ENCODE measurements at regions of chr7 and their contacts with region 1.

Region 1: GRCh38 chr7:34321000-34321581 is 336.9 kb upstream of the NPSR1 start:
- DNase-seq: peak in 6 of 9 donors; percentile 18 to 38 (median 25)
- ATAC-seq: peak; percentile 55
- H3K4me3 ChIP-seq: no peak overlapping the region
- H3K4me3 Mint-ChIP-seq: peak overlapping the region in 5 of 10 donors; percentile 3 to 51 (median 37)
- H3K27ac ChIP-seq: no peak overlapping the region
- H3K27ac Mint-ChIP-seq: no peak overlapping the region
- H3K4me1 ChIP-seq: no peaks in the 10 kb centered on the region
- H3K4me1 Mint-ChIP-seq: peaks cover 0 to 9% (median 3%) of the 10 kb centered on the region in 7 donors
- H3K27me3 ChIP-seq: no peaks in the 10 kb centered on the region
- H3K27me3 Mint-ChIP-seq: peaks cover 8 to 31% (median 22%) of the 10 kb centered on the region in 5 donors

Region 2: GRCh38 chr7:34762764-34763163 is 441.7 kb after region 1 on chr7:
- CTCF ChIA-PET with region 1: no interaction called
- POLR2A ChIA-PET with region 1: no interaction called
- intact Hi-C with region 1: no loop called
- DNase-seq: no peak
- ATAC-seq: no peak
- H3K4me3 ChIP-seq: no peak overlapping the region
- H3K4me3 Mint-ChIP-seq: no peak overlapping the region
- H3K27ac ChIP-seq: no peak overlapping the region
- H3K27ac Mint-ChIP-seq: no peak overlapping the region
- H3K4me1 ChIP-seq: no peaks in the 10 kb centered on the region
- H3K4me1 Mint-ChIP-seq: no peaks in the 10 kb centered on the region
- H3K27me3 ChIP-seq: peaks cover 3 to 5% of the 10 kb centered on the region in 2 donors
- H3K27me3 Mint-ChIP-seq: peaks cover 0 to 29% (median 17%) of the 10 kb centered on the region in 5 donors

Region 3: GRCh38 chr7:34928049-34928448 is 607.0 kb after region 1 on chr7:
- CTCF ChIA-PET with region 1: no interaction called
- POLR2A ChIA-PET with region 1: no interaction called
- intact Hi-C with region 1: loop called in 1 of 2 experiments (anchors 10 kb)
- DNase-seq: peak in 5 of 9 donors; percentile 6 to 37 (median 8)
- ATAC-seq: no peak
- H3K4me3 ChIP-seq: no peak overlapping the region
- H3K4me3 Mint-ChIP-seq: no peak overlapping the region
- H3K27ac ChIP-seq: no peak overlapping the region
- H3K27ac Mint-ChIP-seq: no peak overlapping the region
- H3K4me1 ChIP-seq: no peaks in the 10 kb centered on the region
- H3K4me1 Mint-ChIP-seq: no peaks in the 10 kb centered on the region
- H3K27me3 ChIP-seq: no peaks in the 10 kb centered on the region
- H3K27me3 Mint-ChIP-seq: peaks cover 0 to 9% (median 0%) of the 10 kb centered on the region in 5 donors

Region 4: GRCh38 chr7:35519971-35520809 is 1199.1 kb after region 1 on chr7:
- CTCF ChIA-PET with region 1: no interaction called
- POLR2A ChIA-PET with region 1: no interaction called
- intact Hi-C with region 1: loop called in 1 of 2 experiments (anchors 5 kb)
- DNase-seq: peak in 6 of 9 donors; percentile 38 to 47 (median 40)
- ATAC-seq: peak; percentile 79
- H3K4me3 ChIP-seq: no peak overlapping the region
- H3K4me3 Mint-ChIP-seq: no peak overlapping the region
- H3K27ac ChIP-seq: no peak overlapping the region
- H3K27ac Mint-ChIP-seq: no peak overlapping the region
- H3K4me1 ChIP-seq: no peaks in the 10 kb centered on the region
- H3K4me1 Mint-ChIP-seq: peaks cover 0 to 6% (median 4%) of the 10 kb centered on the region in 7 donors
- H3K27me3 ChIP-seq: no peaks in the 10 kb centered on the region
- H3K27me3 Mint-ChIP-seq: peaks cover 0 to 33% (median 17%) of the 10 kb centered on the region in 5 donors

Region 5: GRCh38 chr7:35624299-35625186 is 1303.5 kb after region 1 on chr7:
- CTCF ChIA-PET with region 1: no interaction called
- POLR2A ChIA-PET with region 1: no interaction called
- intact Hi-C with region 1: loop called in 1 of 2 experiments (anchors 10 kb)
- DNase-seq: peak; percentile 6 to 47 (median 33)
- ATAC-seq: peak; percentile 88
- H3K4me3 ChIP-seq: no peak overlapping the region
- H3K4me3 Mint-ChIP-seq: peak overlapping the region in 5 of 10 donors; percentile 7 to 35 (median 17)
- H3K27ac ChIP-seq: no peak overlapping the region
- H3K27ac Mint-ChIP-seq: peak overlapping the region in 1 of 9 donors; percentile 26
- H3K4me1 ChIP-seq: peaks cover 0 to 4% of the 10 kb centered on the region in 2 donors
- H3K4me1 Mint-ChIP-seq: peaks cover 2 to 8% (median 5%) of the 10 kb centered on the region in 7 donors
- H3K27me3 ChIP-seq: no peaks in the 10 kb centered on the region
- H3K27me3 Mint-ChIP-seq: no peaks in the 10 kb centered on the region